Endothelial cell of umbilical vein (primary cell): ENCODE measurements at regions of chr2 and their contacts with region 1.

Region 1: GRCh38 chr2:12326449-12327190 is 390.1 kb upstream of the TRIB2 start:
- DNase-seq: no peak
- H3K4me3 ChIP-seq: no peak overlapping the region
- H3K27ac ChIP-seq: no peak overlapping the region
- H3K4me1 ChIP-seq: peaks cover 8% of the 10 kb centered on the region
- H3K27me3 ChIP-seq: no peaks in the 10 kb centered on the region
- CTCF ChIP-seq: no peak
- POLR2A ChIP-seq: no peak

Region 2: GRCh38 chr2:12282780-12283695 is 43.6 kb before region 1 on chr2:
- CTCF ChIA-PET with region 1: no interaction called
- POLR2A ChIA-PET with region 1: no interaction called
- dilution Hi-C with region 1: no loop called
- intact Hi-C with region 1: loop called (anchors 1 kb)
- DNase-seq: no peak
- H3K4me3 ChIP-seq: no peak overlapping the region
- H3K27ac ChIP-seq: no peak overlapping the region
- H3K4me1 ChIP-seq: peaks cover 15% of the 10 kb centered on the region
- H3K27me3 ChIP-seq: no peaks in the 10 kb centered on the region
- CTCF ChIP-seq: no peak
- POLR2A ChIP-seq: no peak